ENCODE measurements at regions of chr10 and their contacts with region 1.

Region 1: DNA sequence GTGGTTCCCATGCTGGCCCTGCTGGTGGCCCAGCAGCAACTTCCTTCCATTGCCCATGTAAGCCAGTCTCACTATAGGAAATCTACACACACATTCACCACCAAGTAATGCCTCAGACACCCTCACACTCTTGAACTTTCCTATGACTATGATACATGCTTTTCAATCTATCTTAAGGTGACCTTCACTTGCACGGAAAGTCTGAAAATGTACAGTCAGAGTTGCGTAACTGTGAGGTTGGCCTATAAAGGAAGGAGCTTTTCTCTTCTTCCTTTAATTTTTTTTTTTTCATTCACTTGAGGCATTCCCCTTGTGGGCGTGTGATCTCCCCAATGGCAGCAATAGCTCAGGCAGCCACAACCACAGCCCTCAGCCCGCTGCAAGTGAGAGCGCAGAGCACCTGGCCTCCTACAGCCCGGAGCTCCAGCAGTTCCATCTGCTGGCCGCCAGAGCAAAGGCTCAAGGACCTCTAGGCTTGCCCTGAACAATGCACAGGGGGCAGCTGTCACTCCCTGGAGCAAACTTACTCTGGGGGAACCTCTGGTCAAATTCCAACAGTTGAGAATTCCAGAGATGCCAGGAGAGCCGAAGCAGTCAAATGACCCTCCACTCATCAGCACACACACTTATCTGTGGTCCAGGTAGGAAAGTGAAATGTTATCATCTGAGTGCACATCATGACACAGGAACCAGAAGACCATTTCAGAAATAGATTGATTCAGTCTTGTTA is 123.1 kb upstream of the ADO start:
- DNase-seq: peak; percentile 80 to 91
- H3K4me3 ChIP-seq: no peak overlapping the region
- H3K4me3 Mint-ChIP-seq: no peak overlapping the region
- H3K27ac Mint-ChIP-seq: no peak overlapping the region
- H3K4me1 ChIP-seq: peaks cover 13% of the 10 kb centered on the region
- H3K4me1 Mint-ChIP-seq: peaks cover 8% of the 10 kb centered on the region
- H3K27me3 ChIP-seq: no peaks in the 10 kb centered on the region
- H3K27me3 Mint-ChIP-seq: peaks cover 2% of the 10 kb centered on the region
- CTCF ChIP-seq: peak; percentile 32 to 65

Region 2: DNA sequence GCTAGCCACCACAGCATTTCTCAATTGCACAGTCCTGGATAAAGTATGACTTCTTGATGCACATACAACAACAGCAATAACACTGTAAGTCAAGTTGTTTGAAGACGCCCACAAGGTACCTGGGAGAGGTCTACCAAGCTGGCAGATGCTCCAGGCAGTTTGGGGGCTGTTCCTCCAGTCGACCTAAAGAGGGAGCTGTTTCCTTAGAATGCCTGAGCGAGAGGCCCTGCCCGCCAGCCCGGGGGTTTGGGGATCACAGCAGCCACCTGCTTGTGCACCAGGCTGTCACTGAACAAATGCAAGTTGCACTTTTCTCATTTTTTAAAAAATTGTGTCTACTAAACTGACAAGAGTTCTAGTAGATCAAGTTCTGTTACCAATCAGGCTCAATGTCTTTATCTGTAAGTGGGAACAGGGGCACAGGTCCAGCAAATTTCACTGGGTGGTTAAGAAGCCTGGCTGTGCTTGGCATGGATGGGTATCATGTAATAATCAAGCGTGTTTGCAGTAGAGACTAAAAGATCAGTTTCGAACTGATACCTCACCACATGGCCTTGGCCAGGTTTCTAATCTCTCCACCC is 70.6 kb before region 1 on chr10:
- CTCF ChIA-PET with region 1: no interaction called
- POLR2A ChIA-PET with region 1: no interaction called
- intact Hi-C with region 1: loop called (anchors 2 kb)
- DNase-seq: peak; percentile 79 to 85
- H3K4me3 ChIP-seq: no peak overlapping the region
- H3K4me3 Mint-ChIP-seq: peak overlapping the region; percentile 6
- H3K27ac Mint-ChIP-seq: no peak overlapping the region
- H3K4me1 ChIP-seq: no peaks in the 10 kb centered on the region
- H3K4me1 Mint-ChIP-seq: no peaks in the 10 kb centered on the region
- H3K27me3 ChIP-seq: no peaks in the 10 kb centered on the region
- H3K27me3 Mint-ChIP-seq: peaks cover 18% of the 10 kb centered on the region
- CTCF ChIP-seq: peak; percentile 92 to 93

Region 3: DNA sequence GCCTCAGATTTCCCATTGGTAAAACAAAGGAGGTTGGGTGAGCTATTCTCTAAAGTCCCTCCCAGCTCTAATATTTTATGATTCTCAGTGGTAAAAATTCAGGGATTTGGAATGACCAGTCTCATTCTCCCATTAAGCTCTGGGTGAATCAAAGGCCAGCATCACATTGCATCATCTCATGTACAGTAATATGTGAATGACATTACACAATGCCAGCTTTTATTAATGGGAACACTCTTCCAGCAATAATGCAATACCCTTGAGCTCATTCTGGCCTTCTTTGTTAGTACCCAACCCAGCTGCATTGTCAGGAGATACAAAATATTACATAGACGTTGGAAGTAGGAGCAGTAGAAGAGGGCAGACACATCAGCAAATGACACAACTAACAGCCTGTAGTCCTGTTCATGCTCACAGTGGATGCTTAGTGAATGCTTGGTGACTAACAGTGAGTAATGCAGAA is 234.8 kb after region 1 on chr10:
- CTCF ChIA-PET with region 1: no interaction called
- POLR2A ChIA-PET with region 1: no interaction called
- intact Hi-C with region 1: no loop called
- DNase-seq: no peak
- H3K4me3 ChIP-seq: no peak overlapping the region
- H3K4me3 Mint-ChIP-seq: no peak overlapping the region
- H3K27ac Mint-ChIP-seq: no peak overlapping the region
- H3K4me1 ChIP-seq: no peaks in the 10 kb centered on the region
- H3K4me1 Mint-ChIP-seq: no peaks in the 10 kb centered on the region
- H3K27me3 ChIP-seq: no peaks in the 10 kb centered on the region; the same call in 1 of the 2 replicates
- H3K27me3 Mint-ChIP-seq: peaks cover 14% of the 10 kb centered on the region
- CTCF ChIP-seq: no peak

Measured in Caco-2 (cell line).